Testis (tissue), 5 donors: ENCODE measurements at regions of chr17 and their contacts with region 1.

Region 1: DNA sequence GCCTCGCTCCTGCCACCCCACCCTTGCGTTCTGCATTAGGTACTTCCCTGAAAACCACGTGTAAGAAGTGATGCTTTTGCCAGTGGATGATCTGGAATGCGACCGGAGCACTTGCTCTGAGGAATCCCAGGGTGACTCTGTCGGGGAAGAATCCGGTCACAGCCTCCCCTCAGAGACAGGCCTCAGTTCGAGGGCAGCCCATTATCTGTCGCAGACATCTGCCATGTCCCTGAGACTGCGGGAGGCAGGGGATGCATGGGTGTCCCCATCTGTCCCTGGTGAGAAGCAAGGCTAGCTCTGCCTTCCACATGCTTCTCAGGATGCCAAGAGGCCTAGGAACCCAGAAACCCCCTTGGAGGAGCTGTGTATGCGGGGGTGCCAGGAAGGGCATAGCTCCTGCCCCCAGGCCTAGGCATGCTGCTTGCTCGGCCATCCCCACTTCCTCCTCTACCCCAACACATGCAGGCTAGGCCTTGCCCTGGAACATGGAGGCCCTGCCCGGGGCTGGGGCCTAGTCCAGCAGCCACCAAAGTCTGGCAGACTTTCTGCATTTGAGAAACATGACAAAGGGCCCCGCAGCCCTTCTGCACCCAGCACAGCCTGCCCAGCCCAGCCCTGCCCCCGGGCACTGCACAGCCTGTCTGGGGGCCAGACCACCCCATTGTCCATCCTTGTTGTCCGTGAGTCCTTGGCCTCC is 20.5 kb downstream of the MNT start:
- DNase-seq: no peak
- H3K4me3 ChIP-seq: no peak overlapping the region
- H3K27ac ChIP-seq: no peak overlapping the region
- H3K4me1 ChIP-seq: peaks cover 13% of the 10 kb centered on the region
- H3K27me3 ChIP-seq: no peaks in the 10 kb centered on the region
- CTCF ChIP-seq: no peak
- POLR2A ChIP-seq: no peak

Region 2: GRCh38 chr17:2416010-2416734 is 35.8 kb after region 1 on chr17:
- intact Hi-C with region 1: loop called (anchors 5 kb)
- DNase-seq: peak; percentile 96
- H3K4me3 ChIP-seq: no peak overlapping the region
- H3K27ac ChIP-seq: peak overlapping the region; percentile 51 to 69
- H3K4me1 ChIP-seq: peaks cover 51% of the 10 kb centered on the region
- H3K27me3 ChIP-seq: no peaks in the 10 kb centered on the region
- CTCF ChIP-seq: peak; percentile 94 to 98 (median 97)
- POLR2A ChIP-seq: no peak